ENCODE measurements at regions of chr5 and their contacts with region 1.

Region 1: DNA sequence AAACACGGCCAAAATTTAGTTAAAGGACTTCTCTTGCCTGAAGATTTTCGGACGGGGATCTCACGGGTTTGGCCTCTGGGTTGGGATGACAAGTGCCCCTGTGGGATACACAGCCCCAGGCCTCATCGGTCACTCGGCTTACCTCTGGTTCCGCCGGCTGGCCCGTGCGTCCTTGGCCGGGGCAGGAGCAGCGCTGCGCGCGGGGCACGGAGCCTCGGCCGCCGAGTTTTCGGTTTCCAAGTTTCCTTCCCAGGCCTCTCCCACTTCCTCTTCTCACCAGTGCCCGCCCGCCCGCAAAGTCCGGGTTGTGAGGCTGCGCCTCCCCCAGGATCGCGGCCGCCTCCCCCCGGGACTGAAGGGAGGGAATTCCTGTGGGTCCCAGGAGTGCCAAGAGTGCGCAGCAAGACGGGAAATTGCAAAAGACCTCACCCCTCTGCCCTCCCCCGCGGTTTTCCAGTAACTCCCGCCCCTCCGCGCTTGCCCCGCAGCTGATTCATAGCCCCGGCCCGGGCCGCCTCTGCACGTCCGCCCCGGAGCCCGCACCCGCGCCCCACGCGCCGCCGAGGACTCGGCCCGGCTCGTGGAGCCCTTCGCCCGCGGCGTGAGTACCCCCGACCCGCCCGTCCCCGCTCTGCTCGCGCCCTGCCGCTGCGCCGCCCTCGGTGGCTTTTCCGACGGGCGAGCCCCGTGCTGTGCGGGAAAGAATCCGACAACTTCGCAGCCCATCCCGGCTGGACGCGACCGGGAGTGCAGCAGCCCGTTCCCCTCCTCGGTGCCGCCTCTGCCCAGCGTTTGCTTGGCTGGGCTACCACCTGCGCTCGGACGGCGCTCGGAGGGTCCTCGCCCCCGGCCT is at the start of gene OSMR:
- H3K4me3 ChIP-seq: peak within 1 kb of the TSS; percentile 73
- H3K27ac ChIP-seq: peak within 1 kb of the TSS; percentile 61; the same call in 1 of the 2 replicates
- H3K4me1 ChIP-seq: peaks cover 5% of the 10 kb centered on the region; the same call in 1 of the 2 replicates
- CTCF ChIP-seq: 0 out of 2 replicates have a peak, but pooled peaks have one; percentile 12

Region 2: DNA sequence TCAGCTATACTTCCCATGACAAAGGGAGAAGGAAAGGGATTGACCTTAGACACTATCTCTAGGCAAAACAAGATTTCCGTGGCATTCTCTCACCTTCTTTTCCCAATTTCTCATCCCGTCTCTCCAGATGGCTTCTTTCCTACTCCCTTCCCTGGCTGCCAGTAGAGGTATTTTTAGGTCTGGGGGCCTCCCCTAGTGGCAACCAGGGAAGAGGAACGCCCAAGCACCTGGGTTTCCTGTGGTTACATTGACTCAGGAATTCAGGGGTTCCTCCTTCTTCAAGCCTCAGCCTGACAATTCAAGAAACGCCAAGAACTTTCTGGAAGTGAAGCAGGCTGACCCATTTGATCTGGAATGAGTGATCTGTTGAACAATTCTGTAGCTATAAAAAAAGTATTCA is 111.4 kb before region 1 on chr5:
- CTCF ChIA-PET with region 1: no interaction called
- POLR2A ChIA-PET with region 1: no interaction called
- H3K4me3 ChIP-seq: no peak overlapping the region
- H3K27ac ChIP-seq: no peak overlapping the region
- H3K4me1 ChIP-seq: no peaks in the 10 kb centered on the region
- CTCF ChIP-seq: no peak

Region 3: DNA sequence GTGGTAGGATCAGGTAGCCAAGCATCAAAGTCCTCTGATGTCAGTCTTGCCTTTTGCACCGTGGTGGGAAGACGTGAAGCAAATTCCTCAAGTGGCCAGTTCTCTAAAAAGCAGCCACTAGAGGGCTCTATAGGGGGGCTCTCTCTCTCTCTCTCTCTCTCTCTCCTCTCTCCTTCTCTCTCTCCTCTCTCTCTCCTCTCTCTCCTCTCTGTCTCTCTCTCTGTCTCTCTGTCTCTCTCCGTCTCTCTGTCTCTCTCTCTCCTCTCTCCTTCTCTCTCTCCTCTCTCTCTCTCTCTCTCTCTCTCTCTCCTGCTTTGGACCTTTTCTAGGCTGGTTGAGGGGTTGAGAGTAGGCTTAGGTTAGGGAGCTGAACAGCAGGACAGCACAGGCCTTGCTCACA is 13.8 kb before region 1 on chr5:
- CTCF ChIA-PET with region 1: interaction called, 21 read pairs
- POLR2A ChIA-PET with region 1: no interaction called
- H3K4me3 ChIP-seq: no peak overlapping the region
- H3K27ac ChIP-seq: no peak overlapping the region
- H3K4me1 ChIP-seq: peaks cover 2% of the 10 kb centered on the region; the same call in 1 of the 2 replicates
- CTCF ChIP-seq: no peak; the same call in 1 of the 2 replicates

Region 4: DNA sequence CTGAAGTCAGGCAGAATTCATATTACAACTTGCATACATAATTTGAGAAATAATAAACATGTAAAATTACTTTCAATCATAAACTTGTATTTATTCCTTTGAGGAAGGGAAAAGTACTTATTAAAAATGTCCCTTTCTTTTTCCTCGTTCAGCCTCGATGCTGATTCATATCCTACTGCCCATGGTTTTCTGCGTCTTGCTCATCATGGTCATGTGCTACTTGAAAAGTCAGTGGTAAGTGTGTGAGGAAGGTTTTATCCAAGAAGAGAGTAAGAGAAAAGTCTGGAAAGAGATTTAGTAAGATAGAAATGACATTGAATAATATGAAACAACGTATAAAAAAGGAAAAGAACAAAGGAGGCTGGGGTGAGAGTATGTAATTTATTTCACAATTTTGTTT is 86.0 kb after region 1 on chr5:
- CTCF ChIA-PET with region 1: no interaction called
- POLR2A ChIA-PET with region 1: no interaction called
- H3K4me3 ChIP-seq: no peak overlapping the region
- H3K27ac ChIP-seq: no peak overlapping the region
- H3K4me1 ChIP-seq: no peaks in the 10 kb centered on the region
- CTCF ChIP-seq: no peak

Measured in HEK293 (cell line).